ENCODE measurements at regions of chr16 and their contacts with region 1.

Region 1: GRCh38 chr16:57084257-57084770 is 8.1 kb upstream of the CPNE2 start:
- DNase-seq: peak; percentile 79 to 87
- ATAC-seq: peak; percentile 93
- H3K4me3 ChIP-seq: no peak overlapping the region
- H3K27ac ChIP-seq: no peak overlapping the region
- H3K4me1 ChIP-seq: no peaks in the 10 kb centered on the region
- H3K27me3 ChIP-seq: no peaks in the 10 kb centered on the region

Region 2: DNA sequence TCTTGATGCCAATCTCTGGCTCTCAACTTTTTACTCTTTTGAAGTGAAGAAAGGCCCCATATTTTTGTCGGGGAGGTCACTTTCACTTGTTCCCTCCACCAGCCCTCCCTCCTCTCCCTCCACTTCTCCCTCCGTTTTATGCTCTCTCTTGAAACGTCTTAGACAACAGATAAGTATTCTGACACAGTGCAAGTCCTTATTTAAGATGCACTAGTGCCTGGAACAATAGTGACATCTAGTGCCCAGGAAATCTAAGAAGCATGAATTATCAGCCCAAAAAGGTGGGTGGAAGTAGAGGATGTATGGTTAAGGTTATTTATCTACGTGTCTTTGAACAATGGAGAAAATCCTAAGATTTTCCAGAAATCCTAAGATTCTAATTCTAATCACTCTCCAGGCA is 83.6 kb after region 1 on chr16:
- intact Hi-C with region 1: loop called (anchors 1 to 5 kb)
- DNase-seq: no peak
- ATAC-seq: peak; percentile 76
- H3K4me3 ChIP-seq: no peak overlapping the region
- H3K27ac ChIP-seq: no peak overlapping the region
- H3K4me1 ChIP-seq: no peaks in the 10 kb centered on the region
- H3K27me3 ChIP-seq: no peaks in the 10 kb centered on the region

Region 3: DNA sequence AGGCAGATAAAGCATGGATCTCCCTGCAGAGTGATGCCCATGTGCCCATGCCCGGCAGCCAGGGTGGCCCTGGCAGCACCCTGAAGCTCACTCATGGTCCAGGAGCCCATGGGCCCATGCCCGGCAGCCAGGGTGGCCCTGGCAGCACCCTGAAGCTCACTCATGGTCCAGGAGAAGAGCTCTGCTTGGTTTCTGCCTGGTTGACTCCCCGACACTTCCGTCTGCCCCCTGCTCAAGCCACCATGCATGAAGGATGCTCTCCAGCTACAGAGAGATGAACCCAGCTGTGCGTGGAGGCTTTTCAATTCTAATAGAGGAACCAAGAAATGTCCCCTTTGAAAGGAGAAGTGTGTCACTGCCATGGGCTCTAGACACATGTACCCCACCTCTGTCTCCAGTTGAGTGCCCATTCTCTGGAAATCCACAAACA is 329.0 kb after region 1 on chr16:
- intact Hi-C with region 1: loop called in 1 of 2 experiments (anchors 10 kb)
- DNase-seq: no peak
- ATAC-seq: no peak
- H3K4me3 ChIP-seq: no peak overlapping the region
- H3K27ac ChIP-seq: no peak overlapping the region
- H3K4me1 ChIP-seq: no peaks in the 10 kb centered on the region
- H3K27me3 ChIP-seq: no peaks in the 10 kb centered on the region

Region 4: GRCh38 chr16:57422026-57422944 is 338.0 kb after region 1 on chr16:
- intact Hi-C with region 1: loop called (anchors 10 kb)
- DNase-seq: peak; percentile 64 to 86
- ATAC-seq: peak; percentile 60
- H3K4me3 ChIP-seq: no peak overlapping the region
- H3K27ac ChIP-seq: no peak overlapping the region
- H3K4me1 ChIP-seq: no peaks in the 10 kb centered on the region
- H3K27me3 ChIP-seq: no peaks in the 10 kb centered on the region

Region 5: DNA sequence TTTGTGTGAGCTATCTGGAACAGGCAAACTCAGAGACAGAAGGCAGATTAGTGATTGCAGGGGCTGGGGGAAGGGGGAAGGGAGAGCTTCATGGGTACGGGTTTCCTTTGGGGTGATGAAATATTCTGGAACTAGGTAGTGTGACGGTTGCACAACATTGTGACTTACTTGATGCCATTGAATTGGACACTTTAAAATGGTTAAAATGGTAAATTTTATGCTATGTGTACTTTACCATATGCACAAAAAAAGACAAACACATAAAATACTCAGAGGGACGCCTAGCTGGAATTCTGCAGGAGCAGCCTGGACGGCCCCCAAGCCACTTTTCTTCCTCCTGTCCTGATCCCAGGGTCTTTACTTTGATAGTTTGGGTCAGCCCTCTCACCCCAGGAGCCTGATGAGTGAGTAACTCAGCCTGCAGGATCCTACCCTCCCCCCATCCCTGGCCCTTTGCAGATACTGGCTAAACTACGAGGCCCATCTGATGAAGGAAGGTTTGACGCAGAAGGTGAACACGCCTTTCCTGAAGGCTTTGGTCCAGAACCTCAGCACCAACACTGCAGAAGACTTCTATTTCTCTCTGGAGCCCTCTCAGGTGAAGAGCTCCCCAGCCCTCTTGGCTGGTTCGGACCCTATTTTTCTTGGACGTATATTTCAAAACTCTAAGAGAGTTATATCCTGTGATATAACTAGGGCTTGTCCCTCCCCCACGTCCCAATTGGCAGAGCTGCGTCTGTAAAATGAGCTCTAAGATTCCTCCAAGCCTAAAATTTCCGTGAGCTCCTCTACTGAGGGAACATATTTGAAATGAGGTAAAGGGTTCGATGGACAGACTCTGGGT is 591.6 kb after region 1 on chr16:
- intact Hi-C with region 1: no loop called
- DNase-seq: no peak
- ATAC-seq: no peak
- H3K4me3 ChIP-seq: no peak overlapping the region
- H3K27ac ChIP-seq: no peak overlapping the region
- H3K4me1 ChIP-seq: no peaks in the 10 kb centered on the region
- H3K27me3 ChIP-seq: no peaks in the 10 kb centered on the region

Measured in aorta (tissue), 5 donors.